Sciatic nerve (tissue), 2 donors: ENCODE measurements at regions of chr11 and their contacts with region 1.

Region 1: DNA sequence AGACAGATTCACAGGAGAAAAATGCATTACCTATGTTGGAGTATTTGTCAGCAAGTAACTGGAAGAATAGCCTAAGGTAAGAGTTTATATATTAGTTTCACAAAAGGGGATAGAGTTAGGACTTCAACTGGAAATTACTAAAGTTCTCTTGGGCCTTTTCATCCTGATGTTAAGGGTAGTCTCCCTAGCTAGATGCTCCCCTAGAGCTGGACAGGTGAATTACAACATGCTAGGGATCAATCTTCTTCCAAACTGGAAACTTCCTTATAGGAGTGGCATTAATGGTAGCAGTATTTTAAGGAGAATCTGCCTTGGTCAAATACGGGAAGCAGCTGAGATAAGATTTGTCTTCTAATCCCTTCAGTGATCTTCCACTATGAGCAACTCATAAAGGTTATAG is 632.8 kb upstream of the RAG2 start:
- DNase-seq: no peak
- ATAC-seq: no peak

Region 2: DNA sequence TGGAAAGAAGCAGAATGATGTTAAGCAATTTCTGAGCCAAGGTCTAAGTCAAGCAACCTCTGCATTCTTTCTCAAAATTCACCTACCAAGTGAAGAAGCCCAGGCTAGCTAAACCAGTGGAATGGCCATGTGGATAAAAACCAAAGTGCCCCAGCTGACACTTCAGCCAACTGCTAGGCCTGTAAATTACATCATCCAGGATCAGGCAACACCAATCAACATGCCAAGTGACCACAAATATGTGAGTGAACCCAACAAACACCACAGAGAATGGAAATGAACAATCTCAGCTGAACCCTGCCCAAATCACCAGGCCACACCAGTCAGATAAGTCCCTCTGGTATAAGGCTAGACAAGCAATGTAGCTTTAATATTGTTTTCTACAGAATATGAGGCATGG is 1637.7 kb before region 1 on chr11:
- intact Hi-C with region 1: no loop called
- DNase-seq: no peak
- ATAC-seq: peak; percentile 72

Region 3: GRCh38 chr11:36854875-36855274 is 376.0 kb before region 1 on chr11:
- intact Hi-C with region 1: loop called (anchors 5 kb)
- DNase-seq: no peak
- ATAC-seq: no peak